Posterior cingulate gyrus (tissue), 11 donors: ENCODE measurements at regions of chr7 and their contacts with region 1.

Region 1: DNA sequence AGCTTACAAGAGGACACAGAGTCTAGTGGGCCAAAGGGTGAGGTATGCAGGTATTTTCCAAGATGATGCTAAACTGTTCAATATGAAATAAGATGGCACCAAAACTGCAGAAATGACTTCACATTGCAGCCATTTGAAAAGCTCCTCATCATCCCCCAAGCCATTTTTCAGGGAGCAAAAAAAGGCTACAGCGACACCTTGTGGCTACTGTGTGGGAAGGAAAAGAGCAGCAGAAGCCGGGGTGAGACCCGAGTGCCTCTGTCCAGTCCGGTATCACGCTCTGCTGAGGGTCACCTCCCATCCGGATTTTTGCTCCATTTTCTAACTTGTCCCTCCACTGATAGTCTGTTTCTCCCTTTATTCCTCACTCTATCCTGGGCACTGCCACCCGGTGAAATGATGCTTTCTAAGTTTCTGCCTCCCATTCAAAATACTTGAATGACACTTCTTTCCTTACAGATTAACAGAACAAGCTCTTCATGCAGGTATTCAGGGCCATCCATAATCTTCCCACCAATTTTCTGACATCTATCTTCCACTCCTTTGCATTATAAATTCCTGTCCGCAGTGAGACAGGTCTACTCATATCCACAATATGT is 220.2 kb downstream of the DGKI start:
- DNase-seq: peak in 6 of 10 donors; percentile 21 to 88 (median 56)

Region 2: GRCh38 chr7:137606061-137606674 is 20.4 kb before region 1 on chr7:
- intact Hi-C with region 1: loop called (anchors 2 kb)
- DNase-seq: peak in 1 of 10 donors; percentile 35